WTC11 (cell line): ENCODE measurements at regions of chr5 and their contacts with region 1.

Region 1: GRCh38 chr5:88740604-88741187 is 142.3 kb downstream of the MEF2C start:
- DNase-seq: no peak
- ATAC-seq: no peak
- H3K4me3 Mint-ChIP-seq: no peak overlapping the region
- H3K27ac Mint-ChIP-seq: no peak overlapping the region
- H3K4me1 Mint-ChIP-seq: no peaks in the 10 kb centered on the region
- H3K27me3 Mint-ChIP-seq: no peaks in the 10 kb centered on the region
- CTCF ChIP-seq: no peak

Region 2: DNA sequence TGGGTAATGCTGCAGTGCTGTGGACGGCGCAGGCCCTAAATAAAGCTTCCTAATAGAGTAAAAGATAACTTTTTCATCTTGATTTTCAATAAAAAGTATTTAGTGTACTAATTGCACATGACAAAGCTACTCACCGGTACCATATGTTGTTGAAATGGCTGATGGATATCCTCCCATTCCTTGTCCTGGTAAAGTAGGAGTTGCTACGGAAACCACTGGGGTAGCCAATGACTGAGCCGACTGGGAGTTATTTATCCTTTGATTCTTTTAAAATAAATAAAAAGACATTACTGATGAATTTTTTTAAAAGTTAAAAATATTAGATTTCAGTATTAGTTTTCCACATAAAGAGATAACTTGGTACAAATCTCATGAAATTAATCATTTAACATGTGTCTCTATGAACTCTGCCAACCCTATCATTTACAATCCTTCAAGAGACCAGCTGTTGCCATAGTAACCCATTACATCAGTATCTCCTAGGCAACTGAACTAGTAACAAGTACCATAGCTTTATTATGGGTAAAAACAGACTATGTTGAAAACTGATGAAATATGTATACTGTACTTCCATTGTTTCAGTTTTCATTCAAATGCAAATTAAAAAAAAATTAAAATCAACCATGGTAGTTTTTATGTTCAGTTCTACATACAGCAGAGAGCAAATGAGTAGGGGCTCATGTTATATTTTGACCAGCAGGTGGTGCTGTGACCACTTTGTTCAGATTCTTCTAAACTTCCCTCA is 11.4 kb before region 1 on chr5:
- CTCF ChIA-PET with region 1: interaction called, 14 read pairs
- POLR2A ChIA-PET with region 1: no interaction called
- DNase-seq: peak; percentile 65
- ATAC-seq: peak; percentile 77
- H3K4me3 Mint-ChIP-seq: no peak overlapping the region
- H3K27ac Mint-ChIP-seq: no peak overlapping the region
- H3K4me1 Mint-ChIP-seq: peaks cover 24% of the 10 kb centered on the region
- H3K27me3 Mint-ChIP-seq: no peaks in the 10 kb centered on the region
- CTCF ChIP-seq: peak; percentile 65

Region 3: DNA sequence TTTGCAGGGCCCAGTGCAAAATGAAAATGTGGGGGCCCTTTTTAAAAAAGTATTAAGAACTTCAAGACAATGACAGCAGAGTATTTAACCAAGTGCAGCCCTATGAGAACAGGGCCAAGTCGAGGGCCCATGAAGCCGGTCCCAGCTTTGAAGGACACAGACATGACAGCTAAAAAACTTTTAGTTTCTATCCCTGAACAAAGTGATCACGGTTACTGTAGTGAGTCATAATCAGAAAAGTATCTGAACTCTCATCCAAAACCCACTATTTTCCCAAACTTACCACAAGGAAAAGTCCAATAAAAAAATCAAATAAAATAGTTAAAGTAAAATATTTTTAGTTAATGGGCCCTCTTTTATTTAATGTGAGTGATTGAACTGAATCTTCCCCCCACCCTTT is 16.3 kb after region 1 on chr5:
- CTCF ChIA-PET with region 1: no interaction called
- POLR2A ChIA-PET with region 1: no interaction called
- DNase-seq: no peak
- ATAC-seq: no peak
- H3K4me3 Mint-ChIP-seq: no peak overlapping the region
- H3K27ac Mint-ChIP-seq: no peak overlapping the region
- H3K4me1 Mint-ChIP-seq: peaks cover 13% of the 10 kb centered on the region
- H3K27me3 Mint-ChIP-seq: peaks cover 2% of the 10 kb centered on the region; the same call in 1 of the 2 replicates
- CTCF ChIP-seq: no peak